Naive thymus-derived CD4-positive, alpha-beta T cell (primary cell): ENCODE measurements at regions of chr6 and their contacts with region 1.

Region 1: DNA sequence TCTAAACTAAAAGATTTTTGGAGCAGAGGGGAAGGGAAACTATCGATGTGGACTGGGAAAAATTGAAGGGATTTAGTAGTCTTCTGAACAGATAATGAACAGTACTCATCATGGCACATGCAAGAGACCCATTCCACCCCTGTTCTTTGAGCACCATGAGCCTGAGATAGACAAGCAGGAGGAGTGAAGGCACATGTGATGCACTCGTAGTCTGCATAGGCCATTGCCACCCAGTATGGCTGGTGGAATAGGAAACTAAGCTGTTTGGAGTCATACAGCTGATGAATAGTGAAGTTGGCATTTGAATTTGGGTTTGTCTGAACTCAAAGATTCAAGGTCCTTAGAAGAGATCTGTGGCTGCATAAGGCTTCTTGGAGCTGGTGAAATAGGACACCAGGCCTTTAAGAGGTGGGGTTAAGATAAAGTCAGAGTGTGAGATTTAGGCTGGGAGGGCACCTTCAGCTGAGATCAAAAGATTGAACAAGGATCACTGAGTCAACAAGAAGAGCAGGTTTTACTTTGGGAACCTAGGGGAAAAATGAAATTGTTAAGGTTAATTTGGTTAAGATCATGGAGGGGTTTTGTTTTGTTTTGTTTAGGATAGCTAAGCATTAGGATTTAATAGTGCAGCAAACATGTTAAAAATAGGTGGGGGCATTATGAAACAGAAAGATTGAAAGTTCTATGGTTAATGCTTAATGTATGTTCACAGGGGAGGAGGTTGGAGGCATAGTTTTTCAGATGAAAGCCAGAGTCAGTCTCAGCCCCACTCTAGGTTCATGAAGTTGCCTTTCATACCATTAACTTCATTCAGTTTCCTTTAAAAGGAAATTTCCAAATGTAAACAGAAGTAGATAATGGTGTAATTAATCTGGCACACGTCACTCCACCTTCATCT is 148.8 kb downstream of the ARID1B start:
- DNase-seq: no peak
- ATAC-seq: no peak
- H3K4me3 ChIP-seq: no peak overlapping the region
- H3K4me3 Mint-ChIP-seq: peak overlapping the region in 6 of 10 donors; percentile 0 to 50 (median 4)
- H3K27ac ChIP-seq: no peak overlapping the region
- H3K27ac Mint-ChIP-seq: peak overlapping the region in 3 of 9 donors; percentile 1 to 28 (median 9)
- H3K4me1 ChIP-seq: peaks cover 15 to 24% of the 10 kb centered on the region in 2 donors
- H3K4me1 Mint-ChIP-seq: peaks cover 33 to 87% (median 74%) of the 10 kb centered on the region in 7 donors
- H3K27me3 ChIP-seq: no peaks in the 10 kb centered on the region
- H3K27me3 Mint-ChIP-seq: no peaks in the 10 kb centered on the region

Region 2: GRCh38 chr6:156846845-156847599 is 78.9 kb before region 1 on chr6:
- CTCF ChIA-PET with region 1: no interaction called
- POLR2A ChIA-PET with region 1: no interaction called
- intact Hi-C with region 1: no loop called
- DNase-seq: no peak
- ATAC-seq: no peak
- H3K4me3 ChIP-seq: no peak overlapping the region
- H3K4me3 Mint-ChIP-seq: peak overlapping the region in 6 of 10 donors; percentile 21 to 73 (median 56)
- H3K27ac ChIP-seq: no peak overlapping the region
- H3K27ac Mint-ChIP-seq: peak overlapping the region in 8 of 9 donors; percentile 6 to 76 (median 52)
- H3K4me1 ChIP-seq: peaks cover 27 to 53% of the 10 kb centered on the region in 2 donors
- H3K4me1 Mint-ChIP-seq: peaks cover 60 to 100% (median 97%) of the 10 kb centered on the region in 7 donors
- H3K27me3 ChIP-seq: no peaks in the 10 kb centered on the region
- H3K27me3 Mint-ChIP-seq: no peaks in the 10 kb centered on the region

Region 3: GRCh38 chr6:156910938-156911337 is 15.0 kb before region 1 on chr6:
- CTCF ChIA-PET with region 1: no interaction called
- POLR2A ChIA-PET with region 1: interaction called, 3 read pairs
- intact Hi-C with region 1: loop called in 1 of 2 experiments (anchors 2 kb)
- DNase-seq: no peak
- ATAC-seq: peak; percentile 32
- H3K4me3 ChIP-seq: no peak overlapping the region
- H3K4me3 Mint-ChIP-seq: no peak overlapping the region
- H3K27ac ChIP-seq: no peak overlapping the region
- H3K27ac Mint-ChIP-seq: peak overlapping the region in 1 of 9 donors; percentile 70
- H3K4me1 ChIP-seq: peaks cover 10 to 21% of the 10 kb centered on the region in 2 donors
- H3K4me1 Mint-ChIP-seq: peaks cover 30 to 81% (median 79%) of the 10 kb centered on the region in 7 donors
- H3K27me3 ChIP-seq: no peaks in the 10 kb centered on the region
- H3K27me3 Mint-ChIP-seq: no peaks in the 10 kb centered on the region

Region 4: DNA sequence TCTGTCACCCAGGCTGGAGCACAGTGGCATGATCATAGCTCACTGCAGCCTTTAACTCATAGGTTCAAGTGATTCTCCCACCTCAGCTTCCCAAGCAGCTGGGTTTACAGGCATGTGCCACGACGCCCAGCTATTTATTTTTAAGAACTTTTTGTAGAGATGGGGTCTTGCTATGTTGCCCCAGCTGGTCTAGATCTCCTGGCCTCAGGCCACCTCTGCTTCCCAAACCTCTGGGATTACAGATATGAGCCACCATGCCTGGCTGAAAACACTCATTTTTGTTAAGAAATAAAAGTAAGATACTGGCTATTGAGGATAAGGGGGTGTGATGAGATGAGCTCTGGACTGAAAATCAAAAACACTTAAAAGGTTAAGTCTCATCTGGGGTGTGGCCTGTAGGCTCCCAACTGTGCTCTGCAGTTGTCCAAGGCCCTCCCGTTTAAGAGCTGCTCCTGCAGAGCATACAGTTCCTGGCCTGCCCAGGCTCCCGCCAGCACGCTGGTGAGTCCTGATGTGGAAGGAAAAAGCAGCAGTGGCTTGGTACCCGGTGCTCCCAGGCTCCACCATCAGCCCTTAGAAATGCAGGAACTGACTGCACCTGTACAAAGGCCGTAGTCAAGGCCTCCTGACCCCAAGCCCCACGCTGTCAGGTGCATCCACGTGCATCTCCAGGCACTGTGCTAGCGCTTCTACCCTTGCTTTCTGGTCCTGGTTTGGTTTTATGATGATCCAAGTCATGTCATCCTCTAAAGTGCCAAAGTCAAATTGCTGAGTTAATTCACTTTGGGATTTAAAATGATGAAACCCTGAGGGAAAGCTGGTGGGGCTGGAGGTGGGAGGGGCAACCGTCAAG is 285.9 kb after region 1 on chr6:
- CTCF ChIA-PET with region 1: no interaction called
- POLR2A ChIA-PET with region 1: no interaction called
- intact Hi-C with region 1: no loop called
- DNase-seq: no peak
- ATAC-seq: no peak
- H3K4me3 ChIP-seq: no peak overlapping the region
- H3K4me3 Mint-ChIP-seq: no peak overlapping the region
- H3K27ac ChIP-seq: no peak overlapping the region
- H3K27ac Mint-ChIP-seq: peak overlapping the region in 1 of 9 donors; percentile 17
- H3K4me1 ChIP-seq: no peaks in the 10 kb centered on the region
- H3K4me1 Mint-ChIP-seq: peaks cover 0 to 5% (median 0%) of the 10 kb centered on the region in 7 donors
- H3K27me3 ChIP-seq: no peaks in the 10 kb centered on the region
- H3K27me3 Mint-ChIP-seq: no peaks in the 10 kb centered on the region